Activated naive CD4-positive, alpha-beta T cell treated with anti-CD3 and anti-CD28 coated beads for 36 hours (primary cell): ENCODE measurements at regions of chr19 and their contacts with region 1.

Region 1: GRCh38 chr19:42244347-42245220 is 2.2 kb upstream of the GSK3A start:
- DNase-seq: peak; percentile 96
- H3K4me3 Mint-ChIP-seq: peak overlapping the region; percentile 86
- H3K27ac Mint-ChIP-seq: peak overlapping the region; percentile 99
- H3K4me1 Mint-ChIP-seq: peaks cover 46% of the 10 kb centered on the region
- H3K27me3 Mint-ChIP-seq: no peaks in the 10 kb centered on the region

Region 2: GRCh38 chr19:41377977-41378709 is 866.4 kb before region 1 on chr19:
- CTCF ChIA-PET with region 1: no interaction called
- intact Hi-C with region 1: no loop called
- DNase-seq: no peak
- H3K4me3 Mint-ChIP-seq: no peak overlapping the region
- H3K27ac Mint-ChIP-seq: no peak overlapping the region
- H3K4me1 Mint-ChIP-seq: peaks cover 13% of the 10 kb centered on the region
- H3K27me3 Mint-ChIP-seq: no peaks in the 10 kb centered on the region

Region 3: DNA sequence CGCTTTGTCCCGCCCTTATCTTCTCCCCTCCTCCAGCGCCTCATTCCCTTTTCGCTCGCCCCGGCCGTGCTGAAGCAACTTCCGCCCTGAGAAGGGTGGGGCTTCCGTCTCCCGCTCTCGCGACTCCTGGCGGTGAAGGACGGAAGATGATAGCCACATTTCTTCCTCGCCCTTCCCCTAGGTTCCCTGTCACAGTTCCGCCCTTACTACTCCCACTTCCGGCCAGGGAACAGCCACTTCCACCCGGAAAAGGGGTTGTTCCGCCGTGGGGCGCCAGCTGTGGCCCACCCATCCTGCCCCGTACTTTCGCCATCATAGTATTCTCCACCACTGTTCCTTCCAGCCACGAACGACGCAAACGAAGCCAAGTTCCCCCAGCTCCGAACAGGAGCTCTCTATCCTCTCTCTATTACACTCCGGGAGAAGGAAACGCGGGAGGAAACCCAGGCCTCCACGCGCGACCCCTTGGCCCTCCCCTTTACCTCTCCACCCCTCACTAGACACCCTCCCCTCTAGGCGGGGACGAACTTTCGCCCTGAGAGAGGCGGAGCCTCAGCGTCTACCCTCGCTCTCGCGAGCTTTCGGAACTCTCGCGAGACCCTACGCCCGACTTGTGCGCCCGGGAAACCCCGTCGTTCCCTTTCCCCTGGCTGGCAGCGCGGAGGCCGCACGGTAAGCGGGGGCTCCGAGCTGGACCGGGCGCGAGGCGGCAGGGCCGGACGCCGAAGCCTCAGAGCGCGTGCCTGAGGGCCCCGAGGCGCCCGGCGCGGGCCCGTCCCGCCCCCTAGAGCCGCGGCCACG is 384.8 kb before region 1 on chr19 and contains the start of gene RPS19:
- CTCF ChIA-PET with region 1: no interaction called
- intact Hi-C with region 1: loop called (anchors 1 kb)
- DNase-seq: peak; percentile 99
- H3K4me3 Mint-ChIP-seq: peak within 1 kb of the TSS; percentile 90
- H3K27ac Mint-ChIP-seq: peak within 1 kb of the TSS; percentile 97
- H3K4me1 Mint-ChIP-seq: peaks cover 46% of the 10 kb centered on the region
- H3K27me3 Mint-ChIP-seq: no peaks in the 10 kb centered on the region
- total RNA-seq, gene RPS19: 4,092 to 4,109 TPM

Region 4: DNA sequence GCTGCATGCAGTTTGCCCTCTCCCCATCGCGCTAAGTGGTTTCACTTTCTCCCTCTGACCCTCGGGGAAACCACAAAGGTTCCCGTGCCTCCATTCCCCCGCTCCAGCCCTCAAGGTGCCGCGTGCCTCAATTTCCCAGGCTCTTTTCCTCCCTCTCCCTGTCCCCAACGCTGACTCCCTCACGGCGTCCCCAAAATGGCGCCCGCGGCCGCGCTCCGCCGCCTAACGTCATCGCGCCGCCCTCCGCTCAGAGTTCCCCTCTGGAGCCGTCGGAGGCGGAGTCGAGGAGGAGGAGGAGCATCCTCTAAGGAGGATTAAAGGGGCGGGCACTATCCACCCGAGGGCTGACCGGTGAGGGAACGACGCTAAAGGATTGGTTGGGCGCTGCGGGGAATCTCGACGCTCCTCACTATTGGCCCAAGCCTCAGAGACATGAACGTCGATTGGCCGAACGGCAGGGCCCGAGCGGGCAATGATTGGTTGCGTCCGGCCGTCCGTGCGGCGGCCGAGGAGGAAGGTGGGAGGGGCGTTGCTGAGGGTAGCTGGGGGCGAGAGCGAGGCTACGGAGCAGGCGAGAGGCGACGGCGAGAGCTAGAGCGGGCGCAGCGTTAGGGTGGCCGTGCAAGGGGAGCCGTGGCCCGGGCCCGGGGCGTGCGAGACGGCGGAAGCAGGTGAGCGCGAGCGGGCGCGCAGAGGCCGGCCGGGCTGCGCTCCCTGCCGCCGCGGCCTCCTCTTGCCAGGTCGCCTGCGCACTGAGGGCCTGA is 168.8 kb before region 1 on chr19 and contains the start of gene ZNF574:
- CTCF ChIA-PET with region 1: no interaction called
- intact Hi-C with region 1: loop called (anchors 2 kb)
- DNase-seq: peak; percentile 99
- H3K4me3 Mint-ChIP-seq: peak within 1 kb of the TSS; percentile 97
- H3K27ac Mint-ChIP-seq: peak within 1 kb of the TSS; percentile 96
- H3K4me1 Mint-ChIP-seq: peaks cover 22% of the 10 kb centered on the region
- H3K27me3 Mint-ChIP-seq: no peaks in the 10 kb centered on the region
- total RNA-seq, gene ZNF574: 8.4 to 8.8 TPM

Region 5: GRCh38 chr19:42176990-42177685 is 67.4 kb before region 1 on chr19:
- CTCF ChIA-PET with region 1: interaction called, 3 read pairs
- intact Hi-C with region 1: loop called (anchors 2 kb)
- DNase-seq: peak; percentile 83
- H3K4me3 Mint-ChIP-seq: no peak overlapping the region
- H3K27ac Mint-ChIP-seq: no peak overlapping the region
- H3K4me1 Mint-ChIP-seq: peaks cover 11% of the 10 kb centered on the region
- H3K27me3 Mint-ChIP-seq: peaks cover 26% of the 10 kb centered on the region

Region 6: GRCh38 chr19:42254989-42255765 is 10.6 kb after region 1 on chr19 and contains the start of gene ERF:
- CTCF ChIA-PET with region 1: interaction called, 3 read pairs
- intact Hi-C with region 1: loop called (anchors 1 kb)
- DNase-seq: peak; percentile 93
- H3K4me3 Mint-ChIP-seq: peak within 1 kb of the TSS; percentile 73
- H3K27ac Mint-ChIP-seq: peak within 1 kb of the TSS; percentile 78
- H3K4me1 Mint-ChIP-seq: peaks cover 29% of the 10 kb centered on the region
- H3K27me3 Mint-ChIP-seq: no peaks in the 10 kb centered on the region
- total RNA-seq, gene ERF: 52.4 to 55.6 TPM

Region 7: GRCh38 chr19:42301656-42302203 is 57.1 kb after region 1 on chr19 and contains the start of gene PRR19:
- CTCF ChIA-PET with region 1: interaction called, 4 read pairs
- intact Hi-C with region 1: loop called (anchors 1 kb)
- DNase-seq: no peak
- H3K4me3 Mint-ChIP-seq: peak within 1 kb of the TSS; percentile 85
- H3K27ac Mint-ChIP-seq: peak within 1 kb of the TSS; percentile 85
- H3K4me1 Mint-ChIP-seq: peaks cover 19% of the 10 kb centered on the region
- H3K27me3 Mint-ChIP-seq: no peaks in the 10 kb centered on the region
- total RNA-seq, gene PRR19: 0.27 to 0.43 TPM

Region 8: DNA sequence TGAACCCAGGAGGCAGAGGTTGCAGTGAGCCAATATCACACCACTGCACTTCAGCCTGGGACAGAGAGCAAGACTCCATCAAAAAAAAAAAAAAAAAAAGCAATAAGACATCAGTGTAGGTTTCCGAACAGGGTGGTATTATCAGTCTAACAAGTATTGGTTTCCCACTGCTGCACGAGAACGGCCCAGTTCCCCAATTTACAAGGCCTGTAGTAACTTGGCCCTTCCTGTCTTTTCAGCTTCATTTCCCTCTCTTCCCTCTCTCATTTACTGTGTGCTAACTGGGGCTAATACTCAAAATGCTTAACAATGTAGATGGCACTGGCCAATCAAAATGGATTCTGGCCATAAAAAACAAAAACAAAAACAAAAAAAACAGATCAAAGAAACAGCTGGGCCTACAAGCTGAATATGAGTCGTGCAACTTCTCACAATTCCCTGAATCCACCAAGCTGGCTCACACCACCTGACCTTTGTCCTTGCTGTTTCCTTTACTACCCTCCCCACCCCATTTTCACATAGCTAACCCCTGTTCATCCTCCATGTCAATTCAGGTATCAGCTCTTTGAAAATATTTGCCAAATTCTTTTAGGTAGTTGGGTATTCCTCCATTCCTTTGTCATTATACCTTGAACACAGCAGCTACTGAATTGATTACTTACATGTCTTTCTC is 1172.5 kb after region 1 on chr19:
- CTCF ChIA-PET with region 1: no interaction called
- intact Hi-C with region 1: no loop called
- DNase-seq: no peak
- H3K4me3 Mint-ChIP-seq: no peak overlapping the region
- H3K27ac Mint-ChIP-seq: no peak overlapping the region
- H3K4me1 Mint-ChIP-seq: no peaks in the 10 kb centered on the region
- H3K27me3 Mint-ChIP-seq: no peaks in the 10 kb centered on the region